HCT116 (cell line): ENCODE measurements at regions of chr6 and their contacts with region 1.

Region 1: DNA sequence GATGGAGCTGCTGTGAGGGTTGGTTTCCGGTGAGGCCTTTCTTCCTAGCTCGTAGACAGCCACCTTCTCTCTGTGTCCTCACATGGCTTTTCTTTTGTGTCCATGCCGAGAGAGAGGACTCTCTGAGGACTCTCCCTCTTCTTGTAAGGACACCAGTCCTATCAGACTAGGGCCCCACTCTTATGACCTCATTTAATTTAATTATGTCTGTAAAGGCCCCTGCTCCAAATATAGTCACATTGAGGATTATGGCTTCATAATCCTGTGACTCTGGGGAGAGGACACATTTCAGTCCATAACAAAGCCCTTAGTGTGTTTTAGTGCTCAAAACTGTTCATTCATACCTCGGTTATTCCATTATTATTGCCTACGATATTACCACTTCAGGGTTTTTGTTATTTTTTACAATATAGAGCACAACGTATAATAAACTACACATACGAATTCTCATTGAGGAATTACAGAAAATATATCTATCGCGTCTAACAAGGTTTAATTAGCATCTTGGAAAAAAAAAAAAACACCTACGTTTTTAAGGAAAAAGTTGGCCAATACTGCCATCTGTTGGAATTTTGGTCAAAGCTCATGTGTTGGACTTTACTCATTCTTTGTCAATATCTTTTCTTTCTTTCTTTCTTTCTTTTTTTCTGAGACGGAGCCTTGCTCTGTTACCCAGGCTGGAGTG is 20.0 kb upstream of the TFAP2A start:
- DNase-seq: no peak
- ATAC-seq: peak; percentile 51
- H3K4me3 ChIP-seq: peak overlapping the region; percentile 33 to 35
- H3K27ac ChIP-seq: no peak overlapping the region
- H3K4me1 ChIP-seq: peaks cover 14 to 52% of the 10 kb centered on the region in 2 experiments; a peak in 3 of 4 replicates
- H3K27me3 ChIP-seq: no peaks in the 10 kb centered on the region
- CTCF ChIP-seq: peak; percentile 46 to 69 (median 52); a peak in 5 of 6 replicates
- POLR2A ChIP-seq: no peak
- RAD21 ChIP-seq: peak; percentile 79

Region 2: DNA sequence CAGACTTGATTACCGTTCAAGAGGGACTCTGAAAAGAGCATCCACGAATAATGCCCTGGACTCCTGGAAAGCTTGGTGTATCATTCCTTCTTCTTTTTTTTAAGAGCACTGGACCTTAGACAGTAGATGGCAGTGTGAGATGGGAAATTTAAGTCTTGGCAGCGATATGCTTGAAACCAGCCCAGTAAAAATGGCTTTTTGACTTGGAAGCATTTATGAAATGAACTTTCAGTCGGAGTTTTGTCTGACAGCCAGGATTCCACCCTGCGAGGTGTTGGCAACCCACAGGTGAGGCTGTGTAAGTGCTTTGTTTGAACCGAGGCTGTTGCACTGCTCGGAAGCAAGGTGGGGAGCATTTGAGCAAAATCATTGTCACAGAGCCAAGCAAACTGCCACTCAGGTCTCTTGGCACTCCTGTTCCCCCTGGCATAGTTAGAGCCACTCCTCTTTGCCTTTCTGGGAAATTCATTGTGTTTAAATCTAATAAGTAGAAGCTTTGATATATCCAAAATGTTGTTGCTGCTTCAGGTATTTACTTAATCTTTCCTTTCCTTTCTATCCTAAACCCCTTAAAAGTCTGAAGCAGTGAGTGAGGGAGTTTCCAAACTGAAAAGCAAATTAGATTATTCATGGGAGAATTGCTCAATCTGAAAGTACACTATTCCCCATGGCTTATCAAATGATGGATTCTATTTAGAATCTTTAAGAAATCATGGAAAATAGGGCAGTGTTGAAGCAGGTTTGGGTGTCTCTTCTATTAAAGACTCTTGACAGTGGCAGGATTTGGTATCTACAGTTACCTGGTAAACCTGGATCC is 1726.7 kb before region 1 on chr6:
- CTCF ChIA-PET with region 1: interaction called, 5 read pairs
- POLR2A ChIA-PET with region 1: no interaction called
- RAD21 ChIA-PET with region 1: no interaction called
- intact Hi-C with region 1: loop called (anchors 2 kb)
- DNase-seq: peak; percentile 48
- ATAC-seq: peak; percentile 92
- H3K4me3 ChIP-seq: peak overlapping the region in 1 of 2 experiments; percentile 28; a peak in 2 of 4 replicates
- H3K27ac ChIP-seq: no peak overlapping the region
- H3K4me1 ChIP-seq: peaks cover 0 to 5% of the 10 kb centered on the region in 2 experiments; a peak in 2 of 4 replicates
- H3K27me3 ChIP-seq: no peaks in the 10 kb centered on the region
- CTCF ChIP-seq: peak; percentile 45 to 61 (median 49); a peak in 5 of 6 replicates
- POLR2A ChIP-seq: no peak
- RAD21 ChIP-seq: peak; percentile 76

Region 3: DNA sequence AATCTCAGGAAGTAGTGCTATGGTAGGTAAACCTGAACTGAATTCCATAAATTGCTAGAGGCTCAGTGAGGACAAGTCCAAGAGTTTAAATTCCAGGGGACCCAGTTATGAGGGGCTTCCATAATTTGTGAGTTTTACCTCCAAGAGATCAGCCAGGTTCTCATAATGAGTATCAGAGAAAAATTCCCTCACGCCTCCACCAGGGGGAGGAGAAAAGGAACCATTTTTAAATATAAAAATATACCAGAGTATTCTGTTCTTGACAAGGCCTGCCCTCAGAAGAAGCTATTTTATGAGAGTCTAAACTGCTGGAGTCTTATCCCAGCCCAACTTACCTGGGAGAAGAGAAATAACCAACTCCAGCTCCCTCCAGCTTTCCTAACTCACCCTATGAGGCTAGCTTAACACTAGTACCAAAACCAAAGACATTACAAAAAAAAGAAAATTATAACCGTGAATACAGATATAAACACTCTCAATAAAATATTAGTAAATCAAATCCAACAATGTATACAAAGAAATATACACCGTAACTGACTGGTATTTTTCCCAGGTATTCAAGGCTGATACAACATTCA is 178.6 kb before region 1 on chr6:
- CTCF ChIA-PET with region 1: no interaction called
- POLR2A ChIA-PET with region 1: no interaction called
- RAD21 ChIA-PET with region 1: interaction called in 1 of 2 experiments, 3 read pairs
- intact Hi-C with region 1: loop called (anchors 1 kb)
- DNase-seq: peak; percentile 7
- ATAC-seq: peak; percentile 82
- H3K4me3 ChIP-seq: no peak overlapping the region
- H3K27ac ChIP-seq: no peak overlapping the region
- H3K4me1 ChIP-seq: no peaks in the 10 kb centered on the region
- H3K27me3 ChIP-seq: no peaks in the 10 kb centered on the region
- CTCF ChIP-seq: peak; percentile 43 to 59 (median 56); a peak in 5 of 6 replicates
- POLR2A ChIP-seq: no peak
- RAD21 ChIP-seq: peak; percentile 47

Region 4: GRCh38 chr6:10465629-10466504 is 31.0 kb after region 1 on chr6:
- CTCF ChIA-PET with region 1: interaction called, 11 read pairs
- POLR2A ChIA-PET with region 1: interaction called, 3 read pairs
- RAD21 ChIA-PET with region 1: interaction called in 1 of 2 experiments, 3 read pairs
- intact Hi-C with region 1: no loop called
- DNase-seq: peak; percentile 65
- ATAC-seq: peak; percentile 90
- H3K4me3 ChIP-seq: no peak overlapping the region
- H3K27ac ChIP-seq: no peak overlapping the region
- H3K4me1 ChIP-seq: peaks cover 0 to 20% of the 10 kb centered on the region in 2 experiments; a peak in 1 of 4 replicates
- H3K27me3 ChIP-seq: no peaks in the 10 kb centered on the region
- CTCF ChIP-seq: peak; percentile 34 to 72 (median 64); a peak in 5 of 6 replicates
- POLR2A ChIP-seq: no peak
- RAD21 ChIP-seq: peak; percentile 63

Region 5: GRCh38 chr6:10595731-10596664 is 161.2 kb after region 1 on chr6:
- CTCF ChIA-PET with region 1: no interaction called
- POLR2A ChIA-PET with region 1: no interaction called
- RAD21 ChIA-PET with region 1: no interaction called
- intact Hi-C with region 1: no loop called
- DNase-seq: no peak
- ATAC-seq: no peak
- H3K4me3 ChIP-seq: no peak overlapping the region
- H3K27ac ChIP-seq: no peak overlapping the region
- H3K4me1 ChIP-seq: peaks cover 0 to 4% of the 10 kb centered on the region in 2 experiments; a peak in 1 of 4 replicates
- H3K27me3 ChIP-seq: no peaks in the 10 kb centered on the region
- CTCF ChIP-seq: no peak
- POLR2A ChIP-seq: no peak
- RAD21 ChIP-seq: no peak